Calu3 (cell line): ENCODE measurements at regions of chr13 and their contacts with region 1.

Region 1: GRCh38 chr13:22940736-22941135 is 240.0 kb upstream of the SGCG start:
- DNase-seq: no peak
- H3K4me3 Mint-ChIP-seq: no peak overlapping the region
- H3K27ac Mint-ChIP-seq: no peak overlapping the region
- H3K4me1 Mint-ChIP-seq: no peaks in the 10 kb centered on the region
- H3K27me3 Mint-ChIP-seq: no peaks in the 10 kb centered on the region
- CTCF ChIP-seq: no peak

Region 2: DNA sequence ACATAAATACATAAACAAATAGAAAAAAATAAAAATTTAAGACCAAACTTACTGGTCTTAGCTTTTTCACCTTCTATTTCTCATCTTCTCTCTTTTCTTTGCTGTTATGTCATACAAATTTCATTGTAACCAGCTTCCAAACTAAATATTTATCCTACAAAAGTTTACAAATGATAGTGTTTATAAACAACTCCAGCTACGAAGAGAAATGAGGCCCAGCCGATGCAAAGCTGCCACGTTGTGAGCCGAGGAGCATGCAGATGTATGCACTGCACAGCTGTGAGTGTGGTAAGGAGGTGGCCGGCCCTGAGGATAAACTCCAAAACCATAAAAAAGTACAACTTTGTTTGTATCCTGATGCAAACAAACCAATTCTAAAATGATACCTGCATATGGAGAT is 402.3 kb before region 1 on chr13:
- CTCF ChIA-PET with region 1: no interaction called
- intact Hi-C with region 1: no loop called
- DNase-seq: no peak
- H3K4me3 Mint-ChIP-seq: no peak overlapping the region
- H3K27ac Mint-ChIP-seq: no peak overlapping the region
- H3K4me1 Mint-ChIP-seq: no peaks in the 10 kb centered on the region
- H3K27me3 Mint-ChIP-seq: no peaks in the 10 kb centered on the region
- CTCF ChIP-seq: no peak

Region 3: GRCh38 chr13:22993148-22993547 is 52.4 kb after region 1 on chr13:
- CTCF ChIA-PET with region 1: interaction called, 16 read pairs
- intact Hi-C with region 1: no loop called
- DNase-seq: no peak
- H3K4me3 Mint-ChIP-seq: no peak overlapping the region
- H3K27ac Mint-ChIP-seq: no peak overlapping the region
- H3K4me1 Mint-ChIP-seq: no peaks in the 10 kb centered on the region
- H3K27me3 Mint-ChIP-seq: no peaks in the 10 kb centered on the region
- CTCF ChIP-seq: no peak

Region 4: GRCh38 chr13:23050126-23050525 is 109.4 kb after region 1 on chr13:
- CTCF ChIA-PET with region 1: no interaction called
- intact Hi-C with region 1: no loop called
- DNase-seq: no peak
- H3K4me3 Mint-ChIP-seq: no peak overlapping the region
- H3K27ac Mint-ChIP-seq: no peak overlapping the region
- H3K4me1 Mint-ChIP-seq: no peaks in the 10 kb centered on the region
- H3K27me3 Mint-ChIP-seq: no peaks in the 10 kb centered on the region
- CTCF ChIP-seq: no peak